ENCODE measurements at regions of chr5 and their contacts with region 1.

Region 1: GRCh38 chr5:157172403-157172802 is 6.3 kb upstream of the GARIN3 start:
- DNase-seq: peak; percentile 21 to 90 (median 75)
- ATAC-seq: peak; percentile 98
- H3K4me3 ChIP-seq: peak overlapping the region; percentile 33
- H3K4me3 Mint-ChIP-seq: peak overlapping the region; percentile 49 to 82 (median 73)
- H3K27ac ChIP-seq: peak overlapping the region; percentile 80
- H3K27ac Mint-ChIP-seq: peak overlapping the region; percentile 83 to 96 (median 94)
- H3K4me1 ChIP-seq: peaks cover 20 to 35% of the 10 kb centered on the region in 2 donors
- H3K4me1 Mint-ChIP-seq: peaks cover 33 to 91% (median 73%) of the 10 kb centered on the region in 7 donors
- H3K27me3 ChIP-seq: no peaks in the 10 kb centered on the region
- H3K27me3 Mint-ChIP-seq: no peaks in the 10 kb centered on the region

Region 2: DNA sequence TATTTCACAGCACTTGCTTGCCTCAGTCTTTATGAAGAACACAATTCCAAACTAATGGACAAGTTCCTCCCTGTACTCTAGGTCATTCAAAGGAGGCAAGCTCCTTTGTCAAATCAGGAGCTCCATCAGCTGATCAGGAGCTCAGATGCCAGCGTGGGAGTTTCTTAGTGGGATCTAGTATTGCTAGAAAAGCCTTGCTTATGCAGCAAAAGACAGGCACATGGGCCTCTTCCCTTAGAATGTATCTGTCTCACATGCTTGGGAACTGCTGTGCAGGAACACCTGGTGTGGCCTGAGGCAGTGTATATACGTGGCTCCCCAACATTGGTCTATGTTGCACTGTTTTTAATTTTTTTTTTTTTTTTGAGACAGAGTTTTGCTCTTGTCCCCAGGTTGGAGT is 92.1 kb before region 1 on chr5:
- CTCF ChIA-PET with region 1: no interaction called
- POLR2A ChIA-PET with region 1: no interaction called
- intact Hi-C with region 1: no loop called
- DNase-seq: no peak
- ATAC-seq: no peak
- H3K4me3 ChIP-seq: no peak overlapping the region
- H3K4me3 Mint-ChIP-seq: no peak overlapping the region
- H3K27ac ChIP-seq: no peak overlapping the region
- H3K27ac Mint-ChIP-seq: no peak overlapping the region
- H3K4me1 ChIP-seq: no peaks in the 10 kb centered on the region
- H3K4me1 Mint-ChIP-seq: peaks cover 0 to 22% (median 0%) of the 10 kb centered on the region in 7 donors
- H3K27me3 ChIP-seq: no peaks in the 10 kb centered on the region
- H3K27me3 Mint-ChIP-seq: no peaks in the 10 kb centered on the region

Region 3: GRCh38 chr5:157198277-157198986 is 26.0 kb after region 1 on chr5:
- CTCF ChIA-PET with region 1: interaction called, 3 read pairs
- POLR2A ChIA-PET with region 1: interaction called, 345 read pairs
- intact Hi-C with region 1: loop called in 1 of 2 experiments (anchors 1 kb)
- DNase-seq: peak in 2 of 9 donors; percentile 58 to 77
- ATAC-seq: peak; percentile 49
- H3K4me3 ChIP-seq: peak overlapping the region; percentile 24
- H3K4me3 Mint-ChIP-seq: peak overlapping the region; percentile 47 to 98 (median 78)
- H3K27ac ChIP-seq: peak overlapping the region; percentile 81
- H3K27ac Mint-ChIP-seq: peak overlapping the region; percentile 78 to 98 (median 87)
- H3K4me1 ChIP-seq: peaks cover 86 to 95% of the 10 kb centered on the region in 2 donors
- H3K4me1 Mint-ChIP-seq: peaks cover 53 to 100% (median 97%) of the 10 kb centered on the region in 7 donors
- H3K27me3 ChIP-seq: no peaks in the 10 kb centered on the region
- H3K27me3 Mint-ChIP-seq: no peaks in the 10 kb centered on the region

Region 4: DNA sequence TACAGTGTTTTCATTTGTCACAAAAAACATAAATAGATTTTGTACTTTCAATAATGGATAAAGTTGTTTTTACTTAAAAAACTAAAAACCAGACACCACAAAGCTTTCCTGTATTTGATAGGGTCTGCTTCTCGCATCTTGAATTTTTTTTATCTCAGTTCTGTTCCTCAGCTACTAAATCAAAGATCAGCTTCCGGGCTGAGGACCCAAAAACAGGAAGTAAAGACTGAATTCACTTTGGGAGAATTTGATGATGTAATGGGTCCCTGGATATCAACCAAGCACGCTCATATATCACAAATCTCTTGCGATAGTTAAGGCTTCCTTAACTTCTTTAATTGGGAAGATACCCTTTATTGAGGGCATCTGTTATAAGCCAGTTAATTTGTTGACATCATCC is 32.4 kb after region 1 on chr5:
- CTCF ChIA-PET with region 1: interaction called, 3 read pairs
- POLR2A ChIA-PET with region 1: interaction called, 345 read pairs
- intact Hi-C with region 1: no loop called
- DNase-seq: peak in 7 of 9 donors; percentile 44 to 84 (median 73)
- ATAC-seq: peak; percentile 69
- H3K4me3 ChIP-seq: peak overlapping the region; percentile 10
- H3K4me3 Mint-ChIP-seq: peak overlapping the region; percentile 7 to 93 (median 76)
- H3K27ac ChIP-seq: peak overlapping the region; percentile 64
- H3K27ac Mint-ChIP-seq: peak overlapping the region; percentile 79 to 98 (median 95)
- H3K4me1 ChIP-seq: peaks cover 77 to 87% of the 10 kb centered on the region in 2 donors
- H3K4me1 Mint-ChIP-seq: peaks cover 43 to 96% (median 90%) of the 10 kb centered on the region in 7 donors
- H3K27me3 ChIP-seq: no peaks in the 10 kb centered on the region
- H3K27me3 Mint-ChIP-seq: no peaks in the 10 kb centered on the region

Region 5: GRCh38 chr5:157265714-157266285 is 93.4 kb after region 1 on chr5 and contains the start of gene CYFIP2:
- CTCF ChIA-PET with region 1: no interaction called
- POLR2A ChIA-PET with region 1: interaction called, 4 read pairs
- intact Hi-C with region 1: loop called in 1 of 2 experiments (anchors 1 kb)
- DNase-seq: peak; percentile 68 to 85 (median 84)
- ATAC-seq: peak; percentile 94
- H3K4me3 ChIP-seq: peak within 1 kb of the TSS; percentile 83
- H3K4me3 Mint-ChIP-seq: peak within 1 kb of the TSS; percentile 95 to 99 (median 97)
- H3K27ac ChIP-seq: peak within 1 kb of the TSS; percentile 84
- H3K27ac Mint-ChIP-seq: peak within 1 kb of the TSS; percentile 95 to 99 (median 98)
- H3K4me1 ChIP-seq: peaks cover 41 to 57% of the 10 kb centered on the region in 2 donors
- H3K4me1 Mint-ChIP-seq: peaks cover 51 to 76% (median 72%) of the 10 kb centered on the region in 7 donors
- H3K27me3 ChIP-seq: no peaks in the 10 kb centered on the region
- H3K27me3 Mint-ChIP-seq: no peaks in the 10 kb centered on the region
- total RNA-seq, gene CYFIP2: 386 to 449 (median 401) TPM